ENCODE measurements at regions of chr14 and their contacts with region 1.

Region 1: GRCh38 chr14:20662968-20663732 is 21.2 kb upstream of the RNASE4 start:
- DNase-seq: no peak
- H3K4me3 ChIP-seq: no peak overlapping the region
- H3K27me3 ChIP-seq: 0 out of 2 replicates have a peak, but pooled peaks cover 4% of the 10 kb centered on the region
- CTCF ChIP-seq: peak; percentile 39

Region 2: GRCh38 chr14:20613094-20614037 is 49.8 kb before region 1 on chr14:
- CTCF ChIA-PET with region 1: no interaction called
- POLR2A ChIA-PET with region 1: no interaction called
- DNase-seq: peak; percentile 86
- H3K4me3 ChIP-seq: peak overlapping the region; percentile 47
- H3K27me3 ChIP-seq: no peaks in the 10 kb centered on the region; the same call in 1 of the 2 replicates
- CTCF ChIP-seq: peak; percentile 70

Region 3: GRCh38 chr14:20690848-20691523 is 27.8 kb after region 1 on chr14:
- CTCF ChIA-PET with region 1: interaction called, 10 read pairs
- POLR2A ChIA-PET with region 1: no interaction called
- DNase-seq: no peak
- H3K4me3 ChIP-seq: no peak overlapping the region
- H3K27me3 ChIP-seq: no peaks in the 10 kb centered on the region
- CTCF ChIP-seq: peak; percentile 80

Measured in BJ (cell line).